ENCODE measurements at regions of chr4 and their contacts with region 1.

Region 1: DNA sequence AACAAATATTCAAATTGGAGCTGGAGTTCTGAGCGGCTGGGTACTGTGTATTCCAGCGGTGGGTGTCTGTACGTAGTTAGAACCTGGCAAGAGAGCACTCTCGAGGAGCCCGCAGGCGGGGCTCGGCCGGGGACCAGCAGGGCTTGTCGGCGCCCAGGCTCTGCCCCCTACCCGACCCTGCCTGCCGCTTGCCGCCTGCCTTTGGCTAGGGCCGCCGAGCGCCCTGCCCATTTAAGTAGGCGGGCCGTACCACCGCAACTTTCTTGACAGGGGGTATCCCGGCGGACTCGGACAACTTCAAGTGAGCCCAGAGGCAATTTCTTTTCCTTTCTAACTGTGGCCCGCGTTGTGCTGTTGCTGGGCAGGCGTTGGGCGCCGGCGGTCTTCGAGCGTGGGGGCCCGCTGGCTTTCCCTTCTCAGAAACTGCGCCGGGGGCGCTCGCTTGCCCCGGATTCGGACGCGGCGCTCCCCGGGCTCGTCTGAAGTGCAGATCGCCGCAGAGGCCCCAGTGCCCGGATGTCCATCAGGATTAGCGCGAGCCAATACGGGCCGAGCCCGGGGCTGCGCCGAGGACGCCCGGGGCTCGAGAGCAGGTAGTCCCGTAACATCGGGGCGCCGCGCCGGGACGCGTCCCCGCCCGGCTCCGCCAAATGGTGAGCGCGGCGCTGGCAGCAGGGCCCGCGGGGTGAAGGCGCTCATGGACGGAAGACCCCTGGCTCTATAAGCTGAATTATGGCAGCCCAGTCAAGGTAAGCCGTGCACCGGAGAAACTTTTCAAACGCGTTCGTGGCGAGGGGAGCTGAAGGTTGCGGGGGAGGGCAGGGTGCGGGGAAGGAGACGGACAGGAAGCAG is 72.1 kb downstream of the AFF1 start:
- DNase-seq: peak; percentile 85 to 92 (median 89)
- ATAC-seq: peak; percentile 88
- H3K4me3 ChIP-seq: peak overlapping the region; percentile 85
- H3K4me3 Mint-ChIP-seq: peak overlapping the region; percentile 87 to 100 (median 93)
- H3K27ac ChIP-seq: peak overlapping the region; percentile 91
- H3K27ac Mint-ChIP-seq: peak overlapping the region; percentile 95 to 99 (median 98)
- H3K4me1 ChIP-seq: peaks cover 25 to 28% of the 10 kb centered on the region in 2 donors
- H3K4me1 Mint-ChIP-seq: peaks cover 39 to 72% (median 59%) of the 10 kb centered on the region in 7 donors
- H3K27me3 ChIP-seq: no peaks in the 10 kb centered on the region
- H3K27me3 Mint-ChIP-seq: no peaks in the 10 kb centered on the region

Region 2: DNA sequence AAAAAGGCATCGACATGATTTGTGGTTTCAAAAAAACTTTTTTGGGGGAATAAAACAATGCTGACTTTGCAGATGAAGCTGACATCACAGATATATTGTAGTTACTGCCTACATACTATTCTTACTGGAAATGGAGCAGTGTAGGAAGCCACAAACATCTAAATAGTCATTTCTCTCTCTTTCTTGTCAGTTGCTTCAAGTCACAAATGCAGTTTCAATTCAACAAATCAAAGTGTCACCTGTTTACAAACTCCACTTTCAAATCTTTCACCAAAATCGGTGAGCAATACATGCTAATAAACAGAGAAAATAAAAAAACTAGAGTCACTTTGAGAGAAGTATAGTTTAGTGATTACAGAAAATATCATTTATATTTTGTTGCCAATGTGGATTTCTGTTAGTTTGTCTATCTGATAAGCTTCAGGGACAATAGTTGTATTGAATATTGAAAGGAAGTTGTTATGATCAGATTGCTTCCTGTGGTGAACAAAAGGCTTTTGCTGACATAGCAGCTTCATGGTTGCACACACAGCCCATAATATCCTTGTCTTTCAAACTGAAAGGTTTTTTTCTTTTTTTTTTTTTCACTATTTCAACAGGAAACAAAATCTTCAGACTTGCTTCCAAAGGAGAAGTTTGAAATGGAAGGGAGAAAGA is 462.5 kb before region 1 on chr4:
- CTCF ChIA-PET with region 1: no interaction called
- POLR2A ChIA-PET with region 1: no interaction called
- intact Hi-C with region 1: loop called in 1 of 2 experiments (anchors 10 kb)
- DNase-seq: peak in 2 of 9 donors; percentile 9 to 21
- ATAC-seq: peak; percentile 45
- H3K4me3 ChIP-seq: no peak overlapping the region
- H3K4me3 Mint-ChIP-seq: peak overlapping the region in 3 of 10 donors; percentile 29 to 69 (median 68)
- H3K27ac ChIP-seq: no peak overlapping the region
- H3K27ac Mint-ChIP-seq: peak overlapping the region in 1 of 9 donors; percentile 93
- H3K4me1 ChIP-seq: no peaks in the 10 kb centered on the region
- H3K4me1 Mint-ChIP-seq: peaks cover 5 to 33% (median 13%) of the 10 kb centered on the region in 7 donors
- H3K27me3 ChIP-seq: no peaks in the 10 kb centered on the region
- H3K27me3 Mint-ChIP-seq: peaks cover 4 to 20% (median 15%) of the 10 kb centered on the region in 5 donors

Region 3: DNA sequence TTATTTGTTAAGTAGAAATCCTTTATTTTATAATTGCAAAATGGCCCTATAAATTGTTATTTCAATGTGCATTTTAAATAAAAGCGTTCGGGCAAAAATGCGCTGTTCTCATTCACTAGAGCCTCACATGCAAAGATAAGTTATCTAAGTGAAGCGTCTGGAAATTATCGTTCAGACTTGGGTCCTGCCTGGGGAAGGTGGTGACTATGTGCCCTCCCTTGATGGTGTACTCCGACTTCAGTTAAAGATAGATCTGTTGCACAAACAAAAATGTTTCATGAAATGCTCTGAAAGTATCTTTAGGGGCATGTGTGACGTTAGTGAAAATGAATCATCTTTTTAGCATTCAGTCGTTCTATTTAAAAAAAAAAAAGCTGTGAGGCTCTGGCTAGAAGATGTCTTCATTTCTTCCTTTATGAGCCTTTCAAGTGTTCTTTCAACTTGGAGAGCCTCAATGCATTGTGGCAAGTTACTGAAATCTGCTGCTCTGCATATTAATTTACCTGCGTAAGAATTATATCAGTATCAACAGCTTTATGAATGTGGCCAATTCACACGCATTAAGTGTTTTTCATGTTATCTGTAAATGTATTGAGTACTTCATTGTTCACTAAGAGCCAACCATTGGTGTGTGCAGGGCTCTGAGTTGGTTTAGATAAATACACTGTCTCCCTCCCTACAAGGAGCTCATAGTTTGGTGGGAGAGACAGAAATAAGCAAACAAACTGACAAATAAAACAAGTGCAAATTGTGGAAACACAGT is 10.9 kb after region 1 on chr4:
- CTCF ChIA-PET with region 1: interaction called, 3 read pairs
- POLR2A ChIA-PET with region 1: interaction called, 8 read pairs
- intact Hi-C with region 1: loop called (anchors 1 kb)
- DNase-seq: peak in 4 of 9 donors; percentile 10 to 27 (median 26)
- ATAC-seq: peak; percentile 32
- H3K4me3 ChIP-seq: no peak overlapping the region
- H3K4me3 Mint-ChIP-seq: peak overlapping the region in 8 of 10 donors; percentile 6 to 63 (median 29)
- H3K27ac ChIP-seq: no peak overlapping the region
- H3K27ac Mint-ChIP-seq: peak overlapping the region; percentile 1 to 83 (median 65)
- H3K4me1 ChIP-seq: peaks cover 12 to 32% of the 10 kb centered on the region in 2 donors
- H3K4me1 Mint-ChIP-seq: peaks cover 60 to 91% (median 88%) of the 10 kb centered on the region in 7 donors
- H3K27me3 ChIP-seq: no peaks in the 10 kb centered on the region
- H3K27me3 Mint-ChIP-seq: no peaks in the 10 kb centered on the region

Region 4: DNA sequence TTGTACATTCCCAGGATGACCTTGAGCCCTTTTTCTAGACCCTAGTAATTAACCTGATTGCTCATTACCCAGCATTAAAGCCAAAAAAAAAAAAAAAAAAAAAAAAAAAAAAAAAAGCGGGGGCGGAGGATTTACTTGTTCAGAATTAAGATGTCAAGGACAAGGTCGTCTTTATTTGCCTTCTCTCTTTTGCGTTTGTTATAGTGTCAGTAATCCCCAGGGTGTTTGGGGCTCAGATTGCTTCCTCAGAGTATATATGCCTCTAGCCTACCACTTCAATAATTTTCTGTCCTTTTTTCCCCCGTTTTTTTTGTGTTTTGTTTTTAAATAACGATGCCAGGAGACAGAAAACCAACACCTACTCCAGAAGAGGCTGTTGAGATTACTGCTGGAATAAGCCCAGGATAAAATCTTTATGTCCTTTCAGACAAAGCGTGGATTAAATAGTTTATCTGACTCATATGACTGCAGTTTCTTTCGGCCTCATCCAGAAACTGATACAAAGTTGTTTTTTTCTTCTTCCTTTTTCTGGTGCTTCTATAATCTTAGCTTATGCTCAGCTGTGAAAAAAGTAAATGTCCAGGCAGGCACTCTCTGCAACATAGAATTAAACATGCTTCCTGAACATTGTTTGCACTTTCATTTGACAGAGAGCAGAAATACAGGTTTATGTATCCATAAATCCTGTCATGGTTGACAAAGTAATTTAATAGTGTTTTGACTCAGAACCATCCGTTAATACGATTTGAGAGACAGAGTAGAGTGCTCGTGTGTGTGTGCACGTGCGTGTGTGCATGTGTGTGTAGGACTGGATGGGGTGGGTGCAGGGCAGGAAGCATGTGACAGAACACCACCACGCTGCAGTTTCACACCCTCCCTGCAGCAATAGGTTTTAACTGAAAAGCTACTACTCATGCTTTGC is 66.6 kb after region 1 on chr4:
- CTCF ChIA-PET with region 1: no interaction called
- POLR2A ChIA-PET with region 1: interaction called, 7 read pairs
- intact Hi-C with region 1: loop called (anchors 1 kb)
- DNase-seq: peak in 7 of 9 donors; percentile 20 to 59 (median 54)
- ATAC-seq: peak; percentile 91
- H3K4me3 ChIP-seq: peak overlapping the region; percentile 5
- H3K4me3 Mint-ChIP-seq: peak overlapping the region; percentile 75 to 87 (median 83)
- H3K27ac ChIP-seq: peak overlapping the region; percentile 6
- H3K27ac Mint-ChIP-seq: peak overlapping the region; percentile 41 to 93 (median 73)
- H3K4me1 ChIP-seq: peaks cover 6 to 9% of the 10 kb centered on the region in 2 donors
- H3K4me1 Mint-ChIP-seq: peaks cover 35 to 72% (median 66%) of the 10 kb centered on the region in 7 donors
- H3K27me3 ChIP-seq: no peaks in the 10 kb centered on the region
- H3K27me3 Mint-ChIP-seq: no peaks in the 10 kb centered on the region

Region 5: DNA sequence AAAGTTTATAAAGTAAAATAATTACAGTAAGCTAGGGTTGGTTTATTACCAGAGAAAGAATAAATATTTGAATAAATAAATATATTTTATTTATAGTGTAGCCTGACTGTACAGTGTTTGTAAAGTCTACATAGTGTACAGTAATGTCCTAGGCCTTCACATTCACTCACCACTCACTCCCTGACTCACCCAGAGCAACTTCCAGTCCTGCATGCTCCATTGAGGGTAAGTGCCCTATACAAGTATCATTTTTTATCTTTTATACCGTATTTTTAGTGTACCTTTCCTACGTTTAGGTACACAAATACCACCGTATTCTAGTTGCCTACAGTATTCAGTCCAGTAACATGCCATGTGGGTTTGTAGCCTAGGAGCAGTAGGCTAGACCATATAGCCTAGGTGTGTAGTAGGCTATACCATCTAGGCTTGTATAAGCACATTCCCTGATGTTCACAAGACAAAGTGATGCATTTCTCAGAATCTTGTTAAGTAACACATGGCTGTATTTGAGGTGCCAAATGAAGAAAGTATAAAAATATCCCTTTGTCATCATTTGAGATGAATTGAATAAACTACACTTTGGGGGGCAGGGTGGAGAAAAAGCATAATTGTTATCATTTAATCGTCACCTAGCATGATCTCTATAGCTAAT is 228.2 kb after region 1 on chr4:
- CTCF ChIA-PET with region 1: interaction called, 4 read pairs
- POLR2A ChIA-PET with region 1: no interaction called
- intact Hi-C with region 1: loop called in 1 of 2 experiments (anchors 5 kb)
- DNase-seq: no peak
- ATAC-seq: no peak
- H3K4me3 ChIP-seq: peak overlapping the region; percentile 36
- H3K4me3 Mint-ChIP-seq: peak overlapping the region; percentile 62 to 87 (median 83)
- H3K27ac ChIP-seq: no peak overlapping the region
- H3K27ac Mint-ChIP-seq: peak overlapping the region in 2 of 9 donors; percentile 61 to 66
- H3K4me1 ChIP-seq: peaks cover 0 to 4% of the 10 kb centered on the region in 2 donors
- H3K4me1 Mint-ChIP-seq: peaks cover 0 to 6% (median 0%) of the 10 kb centered on the region in 7 donors
- H3K27me3 ChIP-seq: no peaks in the 10 kb centered on the region
- H3K27me3 Mint-ChIP-seq: peaks cover 0 to 18% (median 5%) of the 10 kb centered on the region in 5 donors

Region 6: DNA sequence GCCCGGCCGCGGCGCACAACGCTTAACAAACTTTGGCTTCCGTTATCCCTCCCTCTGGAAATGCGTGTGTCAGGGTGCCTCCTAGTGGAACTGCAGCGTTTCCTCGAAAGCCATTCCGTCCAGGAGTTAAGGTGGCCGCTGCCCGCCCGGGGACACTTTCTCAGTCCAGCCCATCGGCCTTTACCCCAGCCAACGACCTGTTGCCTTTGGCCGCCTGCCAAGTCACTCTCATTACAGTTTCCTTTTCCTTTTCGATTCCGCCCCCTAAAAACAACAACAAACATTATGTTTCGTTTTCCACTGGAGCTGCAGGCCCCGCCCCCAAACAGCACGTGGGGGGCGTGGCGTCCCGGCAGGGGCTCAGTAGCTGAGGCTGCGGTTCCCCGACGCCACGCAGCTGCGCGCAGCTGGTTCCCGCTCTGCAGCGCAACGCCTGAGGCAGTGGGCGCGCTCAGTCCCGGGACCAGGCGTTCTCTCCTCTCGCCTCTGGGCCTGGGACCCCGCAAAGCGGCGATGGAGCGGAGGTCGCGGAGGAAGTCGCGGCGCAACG is 1449.9 kb after region 1 on chr4 and contains the start of gene HERC5:
- CTCF ChIA-PET with region 1: no interaction called
- POLR2A ChIA-PET with region 1: no interaction called
- intact Hi-C with region 1: loop called in 1 of 2 experiments (anchors 10 kb)
- DNase-seq: peak; percentile 90 to 94 (median 92)
- ATAC-seq: peak; percentile 98
- H3K4me3 ChIP-seq: peak within 1 kb of the TSS; percentile 100
- H3K4me3 Mint-ChIP-seq: peak within 1 kb of the TSS; percentile 87 to 100 (median 98)
- H3K27ac ChIP-seq: peak within 1 kb of the TSS; percentile 72
- H3K27ac Mint-ChIP-seq: peak within 1 kb of the TSS; percentile 94 to 100 (median 99)
- H3K4me1 ChIP-seq: peaks cover 5 to 6% of the 10 kb centered on the region in 2 donors
- H3K4me1 Mint-ChIP-seq: peaks cover 10 to 52% (median 37%) of the 10 kb centered on the region in 7 donors
- H3K27me3 ChIP-seq: no peaks in the 10 kb centered on the region
- H3K27me3 Mint-ChIP-seq: no peaks in the 10 kb centered on the region
- total RNA-seq, gene HERC5: 11.8 to 52.5 (median 14.1) TPM

Measured in naive thymus-derived CD4-positive, alpha-beta T cell (primary cell).